H1 (cell line): ENCODE measurements at regions of chr5 and their contacts with region 1.

Region 1: DNA sequence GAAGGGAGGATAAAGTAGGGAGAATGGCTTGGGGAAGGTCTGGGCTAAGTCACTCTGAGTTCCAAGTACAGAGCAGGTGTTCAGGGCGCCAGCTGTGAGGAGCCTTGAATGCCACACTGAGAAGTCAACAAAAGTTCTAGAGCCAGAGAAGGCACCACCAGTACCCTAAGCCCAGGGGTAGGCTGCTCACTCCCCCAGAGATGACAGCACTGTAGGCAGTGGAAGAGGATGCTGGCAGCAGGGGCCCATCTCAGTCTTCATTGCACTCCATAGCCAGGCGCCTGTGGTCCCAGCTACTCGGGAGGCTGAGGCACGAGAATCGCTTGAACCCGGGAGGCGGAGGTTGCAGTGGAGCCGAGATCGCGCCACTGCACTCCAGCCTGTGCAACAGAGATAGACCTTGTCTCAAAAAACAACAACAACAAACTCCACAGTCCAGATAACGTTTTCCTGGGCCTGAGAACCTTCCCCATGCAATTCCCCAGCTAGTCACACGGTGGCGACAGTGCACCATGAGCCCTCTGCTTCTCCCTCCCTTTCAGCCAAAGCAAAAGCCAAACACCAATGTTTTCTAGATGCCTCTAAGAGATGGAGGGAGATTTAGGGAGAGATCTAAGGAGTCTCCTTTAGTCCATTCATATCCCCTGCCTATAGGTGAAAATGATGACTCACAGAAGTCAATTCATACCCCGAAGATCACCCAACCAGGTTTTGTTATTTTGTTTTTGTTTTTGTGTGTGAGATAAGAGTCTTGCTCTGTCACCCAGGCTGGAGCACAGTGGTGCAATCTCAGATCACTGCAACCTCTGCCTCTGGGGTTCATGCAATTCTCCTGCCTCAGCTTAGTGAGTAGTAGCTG is 19.8 kb upstream of the NSD1 start:
- DNase-seq: peak in 1 of 2 experiments; percentile 93
- H3K4me3 ChIP-seq: no peak overlapping the region
- H3K27ac ChIP-seq: no peak overlapping the region
- H3K4me1 ChIP-seq: peaks cover 0 to 4% (median 4%) of the 10 kb centered on the region in 4 experiments; a peak in 3 of 7 replicates
- H3K27me3 ChIP-seq: peaks cover 0 to 4% (median 1%) of the 10 kb centered on the region in 4 experiments; a peak in 2 of 7 replicates
- CTCF ChIP-seq: peak in 2 of 3 experiments; percentile 93 to 99; a peak in 3 of 4 replicates
- EP300 ChIP-seq: peak in 1 of 2 experiments; percentile 55; a peak in 1 of 3 replicates
- POLR2A ChIP-seq: no peak
- RAD21 ChIP-seq: peak; percentile 99

Region 2: DNA sequence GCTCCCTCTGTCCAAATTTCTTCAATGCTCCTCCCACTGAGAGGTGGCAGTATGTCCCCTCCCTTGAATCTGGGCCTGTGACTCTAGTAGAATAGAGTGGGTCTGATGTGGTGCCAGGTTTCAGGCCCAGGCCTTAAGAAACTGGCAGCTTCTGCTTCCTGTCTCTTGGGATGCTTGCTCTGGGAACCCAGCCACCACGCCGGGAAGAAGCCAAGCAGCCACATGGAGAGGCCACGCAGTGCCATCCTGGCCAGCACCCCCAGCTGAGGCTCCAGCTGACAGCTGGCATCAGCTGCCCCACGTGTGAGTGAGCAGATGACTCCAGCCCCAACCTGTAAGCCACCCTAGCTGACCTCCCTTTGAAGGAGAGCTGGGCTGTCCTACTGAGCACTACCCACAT is 473.8 kb before region 1 on chr5:
- CTCF ChIA-PET with region 1: no interaction called
- POLR2A ChIA-PET with region 1: no interaction called
- DNase-seq: no peak
- H3K4me3 ChIP-seq: no peak overlapping the region
- H3K27ac ChIP-seq: no peak overlapping the region
- H3K4me1 ChIP-seq: peaks cover 0 to 21% (median 14%) of the 10 kb centered on the region in 4 experiments; a peak in 6 of 7 replicates
- H3K27me3 ChIP-seq: no peaks in the 10 kb centered on the region
- CTCF ChIP-seq: no peak
- EP300 ChIP-seq: no peak
- POLR2A ChIP-seq: no peak
- RAD21 ChIP-seq: no peak

Region 3: GRCh38 chr5:177071666-177072385 is 42.0 kb before region 1 on chr5:
- CTCF ChIA-PET with region 1: interaction called, 170 read pairs
- POLR2A ChIA-PET with region 1: interaction called, 3 read pairs
- DNase-seq: peak in 1 of 2 experiments; percentile 88
- H3K4me3 ChIP-seq: no peak overlapping the region
- H3K27ac ChIP-seq: no peak overlapping the region
- H3K4me1 ChIP-seq: no peaks in the 10 kb centered on the region
- H3K27me3 ChIP-seq: no peaks in the 10 kb centered on the region; a peak in 1 of 7 replicates
- CTCF ChIP-seq: peak in 2 of 3 experiments; percentile 65 to 90; a peak in 2 of 4 replicates
- EP300 ChIP-seq: no peak
- POLR2A ChIP-seq: no peak
- RAD21 ChIP-seq: peak; percentile 68 to 76

Region 4: GRCh38 chr5:177086924-177087706 is 26.7 kb before region 1 on chr5:
- CTCF ChIA-PET with region 1: interaction called, 161 read pairs
- POLR2A ChIA-PET with region 1: interaction called, 4 read pairs
- DNase-seq: peak; percentile 25 to 90
- H3K4me3 ChIP-seq: peak overlapping the region; percentile 61 to 83 (median 70)
- H3K27ac ChIP-seq: peak overlapping the region; percentile 21
- H3K4me1 ChIP-seq: peaks cover 0 to 14% (median 8%) of the 10 kb centered on the region in 4 experiments; a peak in 5 of 7 replicates
- H3K27me3 ChIP-seq: no peaks in the 10 kb centered on the region; a peak in 1 of 7 replicates
- CTCF ChIP-seq: peak in 2 of 3 experiments; percentile 67 to 82; a peak in 3 of 4 replicates
- EP300 ChIP-seq: peak in 1 of 2 experiments; percentile 4; a peak in 1 of 3 replicates
- POLR2A ChIP-seq: peak in 1 of 2 experiments; percentile 66; a peak in 2 of 3 replicates
- RAD21 ChIP-seq: peak in 1 of 2 experiments; percentile 40; a peak in 1 of 4 replicates

Region 5: DNA sequence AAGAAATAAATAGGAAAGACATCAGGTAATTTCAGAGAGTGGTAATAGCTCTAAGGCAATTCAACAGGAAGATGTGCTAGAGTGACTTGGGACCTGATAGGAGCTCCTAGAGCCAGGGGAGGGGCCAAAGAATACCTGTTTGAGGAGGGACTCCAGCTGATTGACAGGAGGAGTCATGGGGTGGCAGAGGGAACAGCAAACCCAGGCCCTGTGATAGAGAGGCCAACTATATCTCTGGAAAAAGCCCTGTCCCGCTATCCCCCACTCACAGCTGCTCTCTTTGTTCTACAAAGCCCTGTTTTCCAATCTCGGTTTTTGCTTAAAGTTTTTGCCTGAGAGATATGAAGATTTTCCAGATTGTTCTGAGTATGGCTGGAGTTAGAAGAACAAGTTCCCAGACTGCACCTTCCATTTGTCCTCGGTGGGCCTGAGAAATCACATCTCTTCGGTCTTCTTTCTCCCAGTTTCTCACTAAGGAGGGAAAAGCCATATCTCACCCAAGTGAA is 10.7 kb after region 1 on chr5:
- CTCF ChIA-PET with region 1: interaction called, 77 read pairs
- POLR2A ChIA-PET with region 1: interaction called, 101 read pairs
- DNase-seq: no peak
- H3K4me3 ChIP-seq: no peak overlapping the region
- H3K27ac ChIP-seq: no peak overlapping the region
- H3K4me1 ChIP-seq: peaks cover 0 to 2% (median under 1%) of the 10 kb centered on the region in 4 experiments; a peak in 2 of 7 replicates
- H3K27me3 ChIP-seq: no peaks in the 10 kb centered on the region
- CTCF ChIP-seq: no peak
- EP300 ChIP-seq: no peak
- POLR2A ChIP-seq: no peak
- RAD21 ChIP-seq: no peak

Region 6: DNA sequence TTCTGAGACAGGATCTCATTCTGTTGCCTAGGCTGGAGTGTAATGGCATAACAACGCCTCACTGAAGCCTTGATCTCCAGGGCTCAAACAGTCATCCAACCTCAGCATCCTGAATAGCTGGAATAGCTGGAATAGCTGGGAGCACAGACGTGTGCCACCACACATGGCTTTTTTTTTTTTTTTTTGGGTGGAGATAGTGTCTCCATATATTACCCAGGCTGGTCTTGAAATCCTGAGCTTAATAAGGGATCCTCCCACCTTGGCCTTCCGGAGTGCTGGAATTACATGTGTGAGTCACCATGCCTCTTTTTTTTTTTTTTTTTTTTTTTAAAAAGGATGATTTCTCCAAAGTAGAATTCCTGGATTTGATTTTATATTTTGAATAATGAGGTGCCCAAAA is 80.5 kb after region 1 on chr5:
- CTCF ChIA-PET with region 1: interaction called, 10 read pairs
- POLR2A ChIA-PET with region 1: interaction called, 3 read pairs
- DNase-seq: peak in 1 of 2 experiments; percentile 2
- H3K4me3 ChIP-seq: no peak overlapping the region
- H3K27ac ChIP-seq: no peak overlapping the region
- H3K4me1 ChIP-seq: no peaks in the 10 kb centered on the region
- H3K27me3 ChIP-seq: no peaks in the 10 kb centered on the region
- CTCF ChIP-seq: no peak
- EP300 ChIP-seq: no peak
- POLR2A ChIP-seq: no peak
- RAD21 ChIP-seq: no peak

Region 7: DNA sequence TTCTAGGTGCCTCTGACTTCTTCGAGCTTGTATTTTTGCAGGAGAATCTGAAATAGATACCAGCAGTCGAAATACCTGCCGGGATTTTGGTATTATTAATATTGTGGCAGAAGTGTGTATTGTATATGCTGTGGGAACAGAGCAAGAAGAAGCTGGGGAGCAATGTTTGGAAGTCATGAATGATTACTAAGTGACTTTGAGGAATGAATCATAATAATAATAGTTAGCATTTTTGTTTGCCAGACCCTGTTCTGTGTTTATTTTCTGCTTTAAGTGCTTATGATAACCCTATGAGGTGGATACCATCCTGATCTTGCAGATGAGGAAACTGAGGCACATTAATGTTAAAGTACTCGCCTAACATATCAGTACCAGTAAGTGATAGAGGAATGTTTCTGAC is 157.3 kb after region 1 on chr5:
- CTCF ChIA-PET with region 1: interaction called, 23 read pairs
- POLR2A ChIA-PET with region 1: no interaction called
- DNase-seq: no peak
- H3K4me3 ChIP-seq: no peak overlapping the region
- H3K27ac ChIP-seq: no peak overlapping the region
- H3K4me1 ChIP-seq: no peaks in the 10 kb centered on the region
- H3K27me3 ChIP-seq: no peaks in the 10 kb centered on the region
- CTCF ChIP-seq: no peak
- EP300 ChIP-seq: no peak
- POLR2A ChIP-seq: no peak
- RAD21 ChIP-seq: no peak

Region 8: GRCh38 chr5:177311723-177312648 is 198.2 kb after region 1 on chr5 and contains the start of gene MXD3:
- CTCF ChIA-PET with region 1: interaction called, 60 read pairs
- POLR2A ChIA-PET with region 1: interaction called, 3 read pairs
- DNase-seq: peak; percentile 95 to 98
- H3K4me3 ChIP-seq: peak within 1 kb of the TSS; percentile 52 to 75 (median 67)
- H3K27ac ChIP-seq: peak within 1 kb of the TSS; percentile 89
- H3K4me1 ChIP-seq: peaks cover 0 to 19% (median 14%) of the 10 kb centered on the region in 4 experiments; a peak in 6 of 7 replicates
- H3K27me3 ChIP-seq: no peaks in the 10 kb centered on the region
- CTCF ChIP-seq: no peak
- EP300 ChIP-seq: no peak
- POLR2A ChIP-seq: peak in 1 of 2 experiments; percentile 60; a peak in 2 of 3 replicates
- RAD21 ChIP-seq: no peak
- total RNA-seq, gene MXD3: 7.7 and 10.3 TPM in 2 replicates